ENCODE measurements at regions of chr9 and their contacts with region 1.

Region 1: DNA sequence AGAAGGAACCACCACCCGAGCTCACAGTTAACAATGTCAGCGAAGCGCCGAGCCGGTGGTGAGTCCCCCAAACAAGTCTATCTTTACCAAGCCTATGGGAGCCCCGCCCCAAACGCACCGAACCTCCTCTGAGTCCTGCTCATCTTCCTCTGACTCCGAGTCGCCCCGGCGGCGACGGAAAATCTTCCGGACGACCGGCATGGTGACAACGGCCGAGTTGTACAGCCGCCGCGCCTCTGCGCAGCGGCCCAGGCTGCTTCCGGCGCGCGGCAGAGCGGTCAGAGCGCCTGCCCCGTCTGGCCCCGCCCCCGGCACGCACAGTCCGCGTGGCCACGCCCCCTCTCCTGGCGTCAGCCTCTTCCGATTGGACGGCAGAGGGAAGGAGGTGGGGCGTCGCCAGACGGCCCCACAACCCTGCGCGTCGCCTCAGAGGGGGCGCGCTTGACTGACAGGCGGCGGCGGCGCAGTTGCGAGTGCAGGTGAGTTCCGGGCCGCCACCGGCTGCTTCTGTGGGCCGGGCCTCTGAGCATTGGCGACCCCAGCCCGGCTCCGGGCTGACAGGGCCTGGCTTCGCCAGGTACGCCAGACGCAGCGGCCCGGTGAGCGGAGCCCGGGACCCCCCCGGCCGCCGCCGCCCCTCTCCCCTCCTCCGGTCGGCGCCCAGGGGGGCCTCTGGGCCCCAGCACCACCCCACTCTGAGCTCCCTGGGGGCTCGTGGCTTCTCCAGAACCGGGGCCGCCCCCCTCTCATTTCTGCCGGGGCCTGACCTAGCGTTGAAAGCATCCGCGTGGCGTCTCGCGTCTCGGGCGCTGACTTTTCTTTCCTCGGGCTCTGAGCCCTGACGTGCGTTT is at the starts of genes C9orf78 and USP20:
- DNase-seq: peak; percentile 95 to 99 (median 98)
- ATAC-seq: peak; percentile 98
- H3K4me3 ChIP-seq: peak within 1 kb of the TSS; percentile 96
- H3K4me3 Mint-ChIP-seq: peak within 1 kb of the TSS; percentile 86 to 99 (median 98)
- H3K27ac ChIP-seq: peak within 1 kb of the TSS; percentile 97
- H3K27ac Mint-ChIP-seq: peak within 1 kb of the TSS; percentile 91 to 99 (median 98)
- H3K4me1 ChIP-seq: peaks cover 36 to 50% of the 10 kb centered on the region in 2 donors
- H3K4me1 Mint-ChIP-seq: peaks cover 41 to 65% (median 57%) of the 10 kb centered on the region in 7 donors
- H3K27me3 ChIP-seq: no peaks in the 10 kb centered on the region
- H3K27me3 Mint-ChIP-seq: no peaks in the 10 kb centered on the region
- total RNA-seq, gene C9orf78: 66.2 to 118 (median 95.8) TPM
- total RNA-seq, gene USP20: 94.9 to 156 (median 118) TPM

Region 2: DNA sequence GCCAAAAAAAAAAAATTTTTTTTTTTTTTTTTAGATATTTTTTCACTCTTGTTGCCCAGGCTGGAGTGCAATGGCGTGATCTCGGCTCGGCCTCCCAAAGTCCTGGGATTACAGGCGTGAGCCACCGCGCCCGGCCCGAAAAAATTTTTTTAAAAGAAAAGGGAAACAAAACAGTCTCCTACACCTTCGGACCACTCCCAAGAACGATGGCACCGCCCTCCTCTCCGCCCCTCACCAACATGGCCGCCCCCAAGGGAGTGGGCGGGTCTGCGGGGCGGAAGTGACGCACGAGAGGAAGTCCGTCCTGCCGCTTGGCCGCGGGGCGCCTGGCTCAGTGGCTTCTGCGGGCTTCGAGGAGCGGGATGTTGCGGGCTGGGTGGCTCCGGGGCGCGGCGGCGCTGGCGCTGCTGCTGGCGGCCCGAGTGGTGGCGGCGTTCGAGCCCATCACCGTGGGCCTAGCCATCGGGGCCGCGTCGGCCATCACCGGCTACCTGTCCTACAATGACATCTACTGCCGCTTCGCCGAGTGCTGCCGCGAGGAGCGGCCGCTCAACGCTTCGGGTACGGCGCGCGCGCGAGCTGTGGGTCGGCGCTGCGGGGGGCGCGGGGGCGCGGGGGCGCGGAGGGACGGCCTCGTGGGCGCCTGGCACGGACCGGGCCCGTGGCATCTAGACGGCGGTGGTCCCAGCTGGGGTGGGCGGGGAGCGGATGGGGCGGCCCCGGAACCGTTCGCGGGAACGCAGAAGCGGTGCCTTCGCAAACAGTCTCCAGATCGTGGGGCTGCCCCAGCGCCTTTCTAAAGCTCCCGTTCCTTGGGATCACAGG is 32.2 kb before region 1 on chr9 and contains the start of gene TOR1B:
- CTCF ChIA-PET with region 1: interaction called, 3 read pairs
- POLR2A ChIA-PET with region 1: interaction called, 7 read pairs
- intact Hi-C with region 1: loop called (anchors 1 kb)
- DNase-seq: peak; percentile 91 to 97 (median 94)
- ATAC-seq: peak; percentile 97
- H3K4me3 ChIP-seq: peak within 1 kb of the TSS; percentile 73
- H3K4me3 Mint-ChIP-seq: peak within 1 kb of the TSS; percentile 87 to 95 (median 90)
- H3K27ac ChIP-seq: peak within 1 kb of the TSS; percentile 79
- H3K27ac Mint-ChIP-seq: peak within 1 kb of the TSS; percentile 85 to 97 (median 94)
- H3K4me1 ChIP-seq: peaks cover 12 to 20% of the 10 kb centered on the region in 2 donors
- H3K4me1 Mint-ChIP-seq: peaks cover 15 to 34% (median 28%) of the 10 kb centered on the region in 7 donors
- H3K27me3 ChIP-seq: no peaks in the 10 kb centered on the region
- H3K27me3 Mint-ChIP-seq: no peaks in the 10 kb centered on the region
- total RNA-seq, gene TOR1B: 16.2 to 30.9 (median 23.9) TPM

Region 3: DNA sequence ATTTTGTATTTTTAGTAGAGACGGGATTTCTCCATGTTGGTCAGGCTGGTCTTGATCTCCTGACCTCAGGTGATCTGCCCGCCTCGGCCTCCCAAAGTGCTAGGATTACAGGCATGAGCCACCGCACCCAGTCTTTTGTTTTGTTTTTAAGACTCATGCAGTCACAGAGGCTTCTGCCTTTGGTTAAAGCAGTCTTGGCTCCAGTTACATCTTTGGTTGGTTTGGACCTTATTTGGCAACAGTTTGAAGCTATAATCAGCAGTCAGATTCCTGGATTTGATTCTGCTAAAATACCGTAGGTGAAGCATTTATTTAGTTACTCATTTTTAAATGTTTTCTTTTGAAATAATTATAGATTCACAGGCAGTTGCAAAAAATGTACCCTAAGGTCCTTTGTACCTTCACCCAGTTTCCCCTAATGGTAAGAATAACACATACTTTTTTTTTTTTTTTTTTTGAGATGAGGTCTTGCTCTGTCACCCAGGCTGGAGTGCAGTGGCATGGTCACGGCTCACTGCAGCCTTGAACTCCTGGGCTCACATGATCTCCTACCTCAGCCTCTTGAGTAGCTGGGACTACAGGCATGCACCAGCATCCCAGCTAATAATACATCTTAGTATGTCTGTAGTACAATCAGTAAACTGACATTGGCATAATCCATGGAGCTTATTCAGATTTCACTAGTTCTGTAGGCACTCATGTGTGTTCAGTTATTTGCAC is 15.7 kb after region 1 on chr9:
- CTCF ChIA-PET with region 1: interaction called, 3 read pairs
- POLR2A ChIA-PET with region 1: interaction called, 7 read pairs
- intact Hi-C with region 1: loop called in 1 of 2 experiments (anchors 1 kb)
- DNase-seq: no peak
- ATAC-seq: no peak
- H3K4me3 ChIP-seq: no peak overlapping the region
- H3K4me3 Mint-ChIP-seq: no peak overlapping the region
- H3K27ac ChIP-seq: no peak overlapping the region
- H3K27ac Mint-ChIP-seq: peak overlapping the region in 4 of 9 donors; percentile 50 to 80 (median 64)
- H3K4me1 ChIP-seq: peaks cover 20 to 26% of the 10 kb centered on the region in 2 donors
- H3K4me1 Mint-ChIP-seq: peaks cover 34 to 72% (median 65%) of the 10 kb centered on the region in 7 donors
- H3K27me3 ChIP-seq: no peaks in the 10 kb centered on the region
- H3K27me3 Mint-ChIP-seq: no peaks in the 10 kb centered on the region

Region 4: GRCh38 chr9:129868916-129869486 is 33.8 kb after region 1 on chr9:
- CTCF ChIA-PET with region 1: interaction called, 4 read pairs
- POLR2A ChIA-PET with region 1: interaction called, 162 read pairs
- intact Hi-C with region 1: loop called (anchors 1 kb)
- DNase-seq: peak; percentile 67 to 95 (median 94)
- ATAC-seq: peak; percentile 93
- H3K4me3 ChIP-seq: peak overlapping the region; percentile 57
- H3K4me3 Mint-ChIP-seq: peak overlapping the region; percentile 49 to 77 (median 64)
- H3K27ac ChIP-seq: peak overlapping the region; percentile 87
- H3K27ac Mint-ChIP-seq: peak overlapping the region; percentile 88 to 96 (median 94)
- H3K4me1 ChIP-seq: peaks cover 59 to 73% of the 10 kb centered on the region in 2 donors
- H3K4me1 Mint-ChIP-seq: peaks cover 44 to 93% (median 77%) of the 10 kb centered on the region in 7 donors
- H3K27me3 ChIP-seq: no peaks in the 10 kb centered on the region
- H3K27me3 Mint-ChIP-seq: no peaks in the 10 kb centered on the region

Region 5: GRCh38 chr9:130235897-130236668 is 400.8 kb after region 1 on chr9:
- CTCF ChIA-PET with region 1: no interaction called
- POLR2A ChIA-PET with region 1: no interaction called
- intact Hi-C with region 1: loop called (anchors 1 to 10 kb)
- DNase-seq: peak; percentile 41 to 79 (median 63)
- ATAC-seq: peak; percentile 79
- H3K4me3 ChIP-seq: no peak overlapping the region
- H3K4me3 Mint-ChIP-seq: peak overlapping the region in 7 of 10 donors; percentile 24 to 75 (median 54)
- H3K27ac ChIP-seq: no peak overlapping the region
- H3K27ac Mint-ChIP-seq: peak overlapping the region in 1 of 9 donors; percentile 43
- H3K4me1 ChIP-seq: peaks cover 7 to 11% of the 10 kb centered on the region in 2 donors
- H3K4me1 Mint-ChIP-seq: peaks cover 0 to 25% (median 15%) of the 10 kb centered on the region in 7 donors
- H3K27me3 ChIP-seq: no peaks in the 10 kb centered on the region
- H3K27me3 Mint-ChIP-seq: peaks cover 0 to 2% (median 0%) of the 10 kb centered on the region in 5 donors

Measured in naive thymus-derived CD4-positive, alpha-beta T cell (primary cell).